ENCODE measurements at regions of chrX and their contacts with region 1.

Region 1: DNA sequence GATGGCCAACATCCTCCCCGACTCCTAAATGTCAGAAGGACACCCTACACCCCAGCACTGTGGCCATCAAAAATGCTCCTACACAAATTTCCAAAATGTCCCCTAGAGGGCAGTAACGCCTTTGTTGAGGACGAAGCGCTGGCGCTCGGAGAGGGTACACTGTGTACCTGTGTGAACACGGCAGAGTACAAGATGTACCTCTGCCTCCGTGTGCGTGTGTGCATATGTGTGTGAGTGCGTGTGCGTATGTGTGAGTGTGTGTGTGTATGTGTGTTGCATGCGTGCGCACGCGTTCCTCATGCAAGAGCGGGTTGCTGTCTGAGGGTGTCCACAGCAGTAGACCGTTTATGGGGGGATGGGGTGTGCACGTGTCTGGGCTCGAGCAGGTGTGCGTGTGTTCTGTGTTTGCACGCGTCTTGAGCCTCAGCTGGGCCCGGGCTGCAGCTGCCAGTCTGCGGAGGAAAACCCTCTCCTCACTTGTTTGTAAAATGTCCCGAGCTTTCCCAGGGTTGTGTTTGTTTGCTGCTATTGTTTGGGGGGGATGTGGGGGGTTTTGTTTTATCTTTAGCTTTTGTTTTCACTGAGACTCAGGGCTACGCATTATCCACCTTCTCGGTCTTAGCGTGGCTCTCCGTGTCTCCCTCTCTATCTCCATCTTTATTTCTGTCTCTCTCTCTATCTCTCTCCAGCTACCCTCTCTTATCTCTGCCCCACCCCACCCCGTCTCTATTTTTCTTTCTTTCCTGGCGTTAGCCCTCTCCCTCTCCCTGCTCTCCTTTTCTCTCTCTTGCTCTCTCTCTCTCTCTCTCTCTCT is 10.4 kb upstream of the TSPYL2 start:
- DNase-seq: peak in 1 of 2 donors; percentile 76
- H3K4me3 ChIP-seq: peak overlapping the region; percentile 30 to 61 (median 45)
- H3K27ac ChIP-seq: peak overlapping the region; percentile 1 to 72
- H3K4me1 ChIP-seq: no peaks in the 10 kb centered on the region
- H3K27me3 ChIP-seq: peaks cover 0 to 39% of the 10 kb centered on the region in 2 donors
- CTCF ChIP-seq: peak; percentile 27 to 72 (median 54)
- POLR2A ChIP-seq: no peak

Region 2: DNA sequence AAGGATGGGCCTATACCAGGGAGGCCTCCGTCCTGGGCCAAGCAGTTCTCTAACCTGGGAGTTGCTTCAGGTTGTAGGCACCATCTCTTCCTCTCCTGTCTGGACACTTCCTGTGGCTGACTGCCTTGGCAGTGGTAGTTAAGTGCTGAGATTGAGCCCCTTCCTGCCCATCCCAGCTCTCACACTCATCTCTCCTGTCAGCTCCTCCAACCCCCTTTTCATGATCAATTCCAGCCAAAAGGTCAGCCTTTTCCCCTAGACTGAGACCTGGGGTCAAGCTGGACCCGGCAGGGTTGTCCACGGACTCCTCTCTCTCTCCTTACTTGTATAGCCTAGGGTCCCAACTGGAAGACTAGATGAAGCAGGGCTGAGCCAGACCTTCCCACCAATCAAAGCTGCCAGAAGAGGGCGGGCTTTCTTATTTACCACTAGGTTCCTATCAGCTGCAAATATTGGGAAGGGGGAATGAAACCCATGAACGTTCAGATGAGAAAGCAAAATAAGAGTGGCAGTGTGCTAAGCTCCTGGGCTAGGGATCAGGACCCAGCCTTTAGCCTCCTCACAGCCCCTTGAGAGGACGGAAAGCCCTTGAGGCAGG is 118.7 kb after region 1 on chrX:
- intact Hi-C with region 1: no loop called
- DNase-seq: no peak
- H3K4me3 ChIP-seq: no peak overlapping the region
- H3K27ac ChIP-seq: no peak overlapping the region
- H3K4me1 ChIP-seq: no peaks in the 10 kb centered on the region
- H3K27me3 ChIP-seq: no peaks in the 10 kb centered on the region
- CTCF ChIP-seq: no peak
- POLR2A ChIP-seq: no peak

Region 3: GRCh38 chrX:53433651-53434639 is 362.1 kb after region 1 on chrX and contains the start of gene HSD17B10:
- intact Hi-C with region 1: loop called (anchors 5 kb)
- DNase-seq: peak; percentile 82 to 90
- H3K4me3 ChIP-seq: peak within 1 kb of the TSS; percentile 56 to 68 (median 67)
- H3K27ac ChIP-seq: peak within 1 kb of the TSS; percentile 73 to 77
- H3K4me1 ChIP-seq: no peaks in the 10 kb centered on the region
- H3K27me3 ChIP-seq: peaks cover 0 to 48% of the 10 kb centered on the region in 2 donors
- CTCF ChIP-seq: no peak
- POLR2A ChIP-seq: no peak
- total RNA-seq, gene HSD17B10: 64.8 to 77.7 (median 68.8) TPM

Measured in breast epithelium (tissue), 4 donors.